AG04449 (cell line): ENCODE measurements at regions of chr6 and their contacts with region 1.

Region 1: DNA sequence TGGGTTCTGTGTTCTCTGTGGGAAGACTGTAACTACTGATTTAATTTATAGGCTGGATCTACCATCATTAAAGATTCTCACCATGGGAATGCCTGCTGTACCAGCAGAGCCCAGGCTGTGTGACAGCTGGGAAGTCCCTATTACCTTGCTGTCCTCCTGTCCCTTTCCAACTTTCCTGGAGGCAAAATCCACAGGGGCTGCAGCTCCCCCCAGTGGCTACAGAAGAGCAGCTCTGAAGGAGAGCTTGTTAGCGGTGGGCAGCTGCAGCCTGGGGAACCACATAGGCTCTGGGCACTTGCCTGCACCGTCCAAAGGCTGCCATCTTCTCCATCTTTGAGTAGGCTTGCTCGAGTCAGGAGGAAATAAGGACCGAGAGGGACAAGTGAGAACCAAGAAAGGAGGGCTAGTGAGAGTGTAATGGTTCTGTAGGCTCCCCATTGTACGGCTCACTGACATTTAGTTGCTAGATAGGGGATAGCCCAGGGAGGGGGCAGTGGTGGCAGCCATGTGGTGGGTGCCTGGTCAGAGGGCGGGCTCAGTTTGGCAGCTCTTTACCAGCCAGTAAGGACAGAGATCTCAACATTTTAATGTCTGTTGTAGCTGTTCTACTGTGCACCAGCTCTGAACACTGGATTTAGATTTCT is 155.1 kb upstream of the MLIP start:
- DNase-seq: no peak
- H3K4me3 ChIP-seq: no peak overlapping the region
- CTCF ChIP-seq: peak; percentile 91

Region 2: GRCh38 chr6:53718597-53719460 is 237.4 kb before region 1 on chr6:
- CTCF ChIA-PET with region 1: interaction called, 309 read pairs
- POLR2A ChIA-PET with region 1: no interaction called
- DNase-seq: no peak
- H3K4me3 ChIP-seq: no peak overlapping the region
- CTCF ChIP-seq: peak; percentile 72

Region 3: GRCh38 chr6:53734473-53735299 is 221.5 kb before region 1 on chr6:
- CTCF ChIA-PET with region 1: interaction called, 309 read pairs
- POLR2A ChIA-PET with region 1: no interaction called
- DNase-seq: peak; percentile 64
- H3K4me3 ChIP-seq: no peak overlapping the region
- CTCF ChIP-seq: peak; percentile 51

Region 4: GRCh38 chr6:53794720-53795253 is 161.4 kb before region 1 on chr6 and contains the start of gene LRRC1:
- CTCF ChIA-PET with region 1: interaction called, 64 read pairs
- POLR2A ChIA-PET with region 1: interaction called, 20 read pairs
- DNase-seq: no peak
- H3K4me3 ChIP-seq: peak within 1 kb of the TSS; percentile 86
- CTCF ChIP-seq: no peak

Region 5: DNA sequence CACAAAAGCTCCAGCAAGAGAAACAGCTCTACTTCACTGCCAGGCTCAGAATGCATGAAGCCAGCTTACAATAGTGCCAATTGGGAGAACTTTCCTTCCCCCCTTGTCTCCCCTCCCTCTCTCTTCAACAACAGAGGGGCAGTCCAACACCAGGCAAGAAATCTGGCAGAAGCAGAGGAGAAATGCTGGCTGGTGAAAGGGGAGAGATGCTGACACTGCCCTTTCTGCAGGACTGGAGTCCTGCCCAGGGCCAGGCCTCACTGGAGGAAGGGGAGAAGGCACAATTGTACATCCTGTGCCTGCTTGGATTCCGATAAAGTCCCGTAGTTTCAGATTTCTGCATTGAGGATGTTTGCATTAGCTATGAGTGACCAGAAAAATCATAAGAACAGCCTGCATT is 12.8 kb before region 1 on chr6:
- CTCF ChIA-PET with region 1: interaction called, 20 read pairs
- POLR2A ChIA-PET with region 1: no interaction called
- DNase-seq: no peak
- H3K4me3 ChIP-seq: no peak overlapping the region
- CTCF ChIP-seq: no peak

Region 6: DNA sequence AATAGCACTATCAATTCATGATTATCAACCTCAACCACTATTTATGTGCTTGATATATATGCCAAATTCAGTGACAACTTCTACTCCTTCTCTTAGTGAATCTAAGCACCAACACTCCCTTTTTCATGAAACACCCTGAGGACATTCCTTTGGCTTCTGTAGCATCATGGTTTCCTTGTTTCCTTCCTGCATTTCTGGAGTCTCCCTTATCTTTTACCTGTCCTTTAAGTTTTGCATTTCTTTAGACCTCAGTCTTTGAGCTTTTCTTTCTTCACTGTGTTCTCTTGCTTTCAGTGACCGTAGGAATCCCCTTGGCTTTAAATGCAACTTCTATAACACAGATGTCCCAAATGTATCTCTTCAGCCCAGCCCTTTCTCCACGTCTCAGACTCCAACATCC is 11.2 kb after region 1 on chr6:
- CTCF ChIA-PET with region 1: interaction called, 11 read pairs
- POLR2A ChIA-PET with region 1: no interaction called
- DNase-seq: no peak
- H3K4me3 ChIP-seq: no peak overlapping the region
- CTCF ChIP-seq: no peak